ENCODE measurements at regions of chr10 and their contacts with region 1.

Region 1: DNA sequence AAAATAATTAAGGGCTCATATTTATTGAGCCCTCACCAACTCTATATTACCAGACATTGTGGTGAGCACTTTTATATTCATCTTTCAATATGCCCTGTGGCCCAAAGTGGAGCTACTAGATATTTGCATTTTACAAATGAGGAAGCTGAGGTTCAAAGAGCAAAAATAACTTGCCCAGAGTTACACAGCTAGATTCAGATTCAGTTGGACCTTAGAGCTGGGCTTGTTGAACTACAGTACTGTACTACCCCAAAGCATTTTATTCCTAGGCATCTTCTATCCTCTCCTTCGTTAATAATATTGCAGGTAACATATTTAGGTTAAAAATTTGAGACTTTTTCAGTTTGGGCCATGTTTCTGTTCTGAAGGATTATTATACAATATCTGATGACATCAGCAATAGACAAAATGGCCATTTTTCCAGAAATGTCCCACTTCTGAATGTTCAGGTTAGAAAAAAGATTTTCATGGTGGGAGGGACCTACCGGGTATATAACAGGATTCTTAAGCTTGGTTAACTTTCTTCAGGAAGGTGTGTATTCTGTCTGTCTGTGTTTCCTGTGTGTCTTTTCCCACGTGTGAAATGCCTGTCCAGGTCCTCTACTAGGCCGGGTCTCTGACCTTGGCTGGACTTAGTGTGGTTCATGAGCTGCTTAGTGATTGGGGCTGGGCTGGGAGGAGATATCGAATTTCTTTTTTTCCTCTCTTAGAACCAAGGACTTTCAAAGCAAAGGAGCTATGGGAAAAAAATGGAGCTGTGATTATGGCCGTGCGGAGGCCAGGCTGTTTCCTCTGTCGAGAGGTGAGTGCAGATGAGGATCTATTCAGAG is 13.6 kb downstream of the PRXL2A start:
- DNase-seq: no peak
- H3K4me3 ChIP-seq: no peak overlapping the region
- H3K27ac ChIP-seq: no peak overlapping the region
- H3K4me1 ChIP-seq: peaks cover 2% of the 10 kb centered on the region
- H3K27me3 ChIP-seq: no peaks in the 10 kb centered on the region
- CTCF ChIP-seq: no peak
- POLR2A ChIP-seq: no peak

Region 2: DNA sequence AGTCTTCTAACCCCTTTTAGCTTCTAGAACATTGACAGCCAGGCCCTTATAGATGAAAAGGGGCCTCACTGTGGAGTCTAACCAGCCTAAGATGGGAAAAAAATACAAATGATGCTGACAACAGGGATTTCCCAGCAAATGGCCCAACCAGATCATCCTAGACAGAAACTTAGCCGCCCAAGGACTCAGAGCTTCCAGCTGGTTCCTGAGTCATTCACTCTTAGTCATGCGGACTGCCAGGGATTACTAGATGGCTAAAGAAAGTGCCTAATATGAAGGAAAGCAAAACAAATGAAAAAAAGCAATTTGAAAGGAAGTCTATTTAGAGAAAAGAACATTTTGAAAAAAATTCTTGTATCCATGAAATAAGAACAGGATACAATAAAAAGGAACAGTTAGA is 55.9 kb after region 1 on chr10:
- CTCF ChIA-PET with region 1: no interaction called
- POLR2A ChIA-PET with region 1: interaction called, 11 read pairs
- dilution Hi-C with region 1: no loop called
- intact Hi-C with region 1: no loop called
- DNase-seq: peak; percentile 81
- H3K4me3 ChIP-seq: no peak overlapping the region
- H3K27ac ChIP-seq: peak overlapping the region; percentile 68
- H3K4me1 ChIP-seq: peaks cover 45% of the 10 kb centered on the region
- H3K27me3 ChIP-seq: no peaks in the 10 kb centered on the region
- CTCF ChIP-seq: no peak
- POLR2A ChIP-seq: no peak

Region 3: GRCh38 chr10:81036257-81036656 is 614.3 kb after region 1 on chr10:
- CTCF ChIA-PET with region 1: no interaction called
- POLR2A ChIA-PET with region 1: no interaction called
- dilution Hi-C with region 1: no loop called
- intact Hi-C with region 1: no loop called
- DNase-seq: no peak
- H3K4me3 ChIP-seq: no peak overlapping the region
- H3K27ac ChIP-seq: no peak overlapping the region
- H3K4me1 ChIP-seq: no peaks in the 10 kb centered on the region
- H3K27me3 ChIP-seq: no peaks in the 10 kb centered on the region
- CTCF ChIP-seq: no peak
- POLR2A ChIP-seq: no peak

Measured in endothelial cell of umbilical vein (primary cell).